Activated naive CD4-positive, alpha-beta T cell treated with anti-CD3 and anti-CD28 coated beads, Interleukin-2, amount 10 ng/mL, durations not matched to agents 7 days and 5 days (primary cell): ENCODE measurements at regions of chr4 and their contacts with region 1.

Region 1: GRCh38 chr4:7876201-7876875 is 63.3 kb downstream of the AFAP1 start:
- DNase-seq: peak; percentile 67
- H3K4me3 Mint-ChIP-seq: peak overlapping the region; percentile 52
- H3K27ac Mint-ChIP-seq: peak overlapping the region; percentile 92
- H3K4me1 Mint-ChIP-seq: peaks cover 70% of the 10 kb centered on the region
- H3K27me3 Mint-ChIP-seq: no peaks in the 10 kb centered on the region

Region 2: DNA sequence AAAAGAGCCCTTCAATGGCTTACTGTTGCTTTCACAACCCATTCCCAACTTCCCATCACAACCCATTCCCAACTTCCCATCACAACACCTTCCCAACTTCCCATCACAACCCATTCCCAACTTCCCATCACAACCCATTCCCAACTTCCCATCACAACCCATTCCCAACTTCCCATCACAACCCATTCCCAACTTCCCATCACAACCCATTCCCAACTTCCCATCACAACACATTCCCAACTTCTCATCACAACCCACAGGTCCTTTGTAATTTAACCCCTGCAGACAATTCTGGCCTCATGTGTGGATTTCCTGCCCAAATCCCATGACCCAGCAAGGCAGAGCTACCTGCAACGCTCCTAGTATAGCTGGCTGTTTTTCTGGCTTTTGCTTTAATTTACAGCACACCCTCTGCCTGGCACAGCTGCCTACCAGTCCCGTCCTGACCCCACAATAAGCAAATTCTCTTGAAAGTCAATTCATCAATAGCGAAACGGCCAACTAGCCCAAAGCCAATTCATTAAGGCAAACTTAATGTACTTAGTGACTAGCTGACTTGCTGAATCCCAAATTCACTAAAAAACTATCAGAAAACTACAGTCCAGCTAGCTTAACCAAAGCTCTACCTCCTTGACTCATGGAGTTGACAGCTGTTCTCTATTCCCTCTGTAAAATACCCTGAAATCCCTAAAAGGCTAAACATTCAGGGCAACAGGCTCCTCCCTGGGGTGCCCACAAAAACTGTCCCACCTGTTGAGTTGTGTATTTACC is 12.2 kb before region 1 on chr4:
- CTCF ChIA-PET with region 1: interaction called, 13 read pairs
- DNase-seq: peak; percentile 38
- H3K4me3 Mint-ChIP-seq: peak overlapping the region; percentile 4
- H3K27ac Mint-ChIP-seq: peak overlapping the region; percentile 60
- H3K4me1 Mint-ChIP-seq: peaks cover 27% of the 10 kb centered on the region
- H3K27me3 Mint-ChIP-seq: peaks cover 4% of the 10 kb centered on the region

Region 3: GRCh38 chr4:7945709-7946380 is 69.5 kb after region 1 on chr4:
- CTCF ChIA-PET with region 1: no interaction called
- DNase-seq: no peak
- H3K4me3 Mint-ChIP-seq: no peak overlapping the region
- H3K27ac Mint-ChIP-seq: no peak overlapping the region
- H3K4me1 Mint-ChIP-seq: peaks cover 19% of the 10 kb centered on the region
- H3K27me3 Mint-ChIP-seq: peaks cover 32% of the 10 kb centered on the region